ENCODE measurements at regions of chr21 and their contacts with region 1.

Region 1: DNA sequence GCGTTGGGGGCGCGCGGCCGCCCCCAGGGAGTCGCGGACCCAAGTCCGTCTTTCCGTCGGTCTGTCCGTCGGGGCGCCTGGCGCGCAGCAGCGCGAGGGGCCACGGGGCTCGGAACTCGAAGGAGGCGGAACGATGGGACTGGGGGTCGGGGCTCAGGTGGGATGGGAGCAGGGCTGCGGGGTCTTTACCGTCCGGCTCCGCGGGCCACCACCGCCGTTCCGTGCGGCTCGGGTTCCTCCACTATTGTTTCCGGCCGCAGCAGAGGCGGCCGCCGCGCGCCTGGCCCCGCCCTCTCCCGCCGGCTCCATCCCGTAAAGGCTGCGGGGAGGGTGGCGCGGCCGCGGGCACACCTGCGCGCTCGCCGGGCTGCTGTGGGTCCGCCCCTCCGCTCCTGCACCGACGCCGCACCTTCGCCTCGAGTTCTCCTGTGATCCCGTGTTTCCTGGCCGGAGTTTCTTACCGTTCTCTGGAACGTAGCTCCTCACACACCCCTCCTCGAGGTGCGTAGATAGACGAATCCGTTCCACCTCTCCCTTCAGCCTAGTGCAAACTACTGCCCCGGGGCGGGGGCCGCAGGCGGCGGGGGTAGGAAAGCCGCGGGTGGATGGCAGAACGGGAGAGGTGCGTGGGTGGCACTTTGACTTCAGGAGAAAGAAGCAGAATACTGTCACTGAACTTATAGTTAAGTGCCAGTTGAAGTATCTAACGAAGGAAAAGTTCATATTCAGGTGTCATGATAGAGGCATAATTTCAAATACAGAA is at the start of gene C21orf91:
- DNase-seq: peak; percentile 78
- ATAC-seq: peak; percentile 93
- H3K4me3 ChIP-seq: peak within 1 kb of the TSS; percentile 71 to 80
- H3K27ac ChIP-seq: peak within 1 kb of the TSS; percentile 87
- H3K4me1 ChIP-seq: peaks cover 6 to 19% of the 10 kb centered on the region in 2 experiments; a peak in 3 of 4 replicates
- H3K27me3 ChIP-seq: no peaks in the 10 kb centered on the region
- CTCF ChIP-seq: no peak
- POLR2A ChIP-seq: peak; percentile 51
- RAD21 ChIP-seq: no peak
- total RNA-seq, gene C21orf91: 17.7 TPM

Region 2: DNA sequence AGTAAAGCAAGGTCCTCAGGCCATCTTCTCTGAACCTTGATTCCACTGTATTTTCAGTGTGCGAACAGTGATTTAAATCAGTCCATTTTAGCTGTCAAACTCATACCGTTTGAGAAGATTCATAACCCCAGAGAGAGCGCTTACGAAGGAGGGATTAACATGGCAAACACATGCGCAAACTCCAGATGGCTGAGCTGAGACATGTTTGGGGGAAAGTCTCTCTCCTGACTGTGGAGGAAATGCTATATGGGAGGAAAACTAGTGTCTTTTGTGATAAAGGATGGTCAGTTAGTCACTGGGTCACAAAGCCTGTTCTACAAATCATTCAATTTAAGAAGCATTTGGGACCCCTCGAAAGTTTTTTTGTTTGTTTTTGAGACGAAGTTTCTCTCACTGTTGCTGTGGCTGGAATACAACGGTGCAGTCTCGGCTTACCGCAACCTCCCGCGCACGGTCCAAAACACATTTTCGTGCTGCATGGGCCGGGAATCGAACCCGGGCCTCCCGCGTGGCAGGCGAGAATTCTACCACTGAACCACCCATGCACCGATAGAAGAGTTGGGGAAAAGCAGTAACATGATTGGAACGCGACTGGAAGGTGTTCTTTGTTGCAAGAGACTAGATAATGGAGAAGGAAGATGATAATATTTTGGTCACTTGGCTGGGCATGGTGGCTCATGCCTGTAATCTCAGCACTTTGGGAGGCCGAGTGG is 364.8 kb before region 1 on chr21:
- CTCF ChIA-PET with region 1: no interaction called
- POLR2A ChIA-PET with region 1: no interaction called
- RAD21 ChIA-PET with region 1: no interaction called
- intact Hi-C with region 1: loop called (anchors 1 kb)
- DNase-seq: peak; percentile 89
- ATAC-seq: peak; percentile 94
- H3K4me3 ChIP-seq: peak overlapping the region in 1 of 2 experiments; percentile 15; a peak in 1 of 4 replicates
- H3K27ac ChIP-seq: peak overlapping the region; percentile 58
- H3K4me1 ChIP-seq: peaks cover 10 to 15% of the 10 kb centered on the region in 2 experiments
- H3K27me3 ChIP-seq: no peaks in the 10 kb centered on the region
- CTCF ChIP-seq: no peak
- POLR2A ChIP-seq: no peak
- RAD21 ChIP-seq: no peak

Region 3: GRCh38 chr21:17527240-17527639 is 292.1 kb before region 1 on chr21:
- CTCF ChIA-PET with region 1: no interaction called
- POLR2A ChIA-PET with region 1: no interaction called
- RAD21 ChIA-PET with region 1: no interaction called
- intact Hi-C with region 1: no loop called
- DNase-seq: no peak
- ATAC-seq: no peak
- H3K4me3 ChIP-seq: no peak overlapping the region
- H3K27ac ChIP-seq: no peak overlapping the region
- H3K4me1 ChIP-seq: peaks cover 3 to 5% of the 10 kb centered on the region in 2 experiments; a peak in 1 of 4 replicates
- H3K27me3 ChIP-seq: no peaks in the 10 kb centered on the region
- CTCF ChIP-seq: no peak
- POLR2A ChIP-seq: no peak
- RAD21 ChIP-seq: no peak

Region 4: GRCh38 chr21:17611414-17612022 is 207.8 kb before region 1 on chr21:
- CTCF ChIA-PET with region 1: no interaction called
- POLR2A ChIA-PET with region 1: no interaction called
- RAD21 ChIA-PET with region 1: no interaction called
- intact Hi-C with region 1: loop called (anchors 10 kb)
- DNase-seq: peak; percentile 74
- ATAC-seq: peak; percentile 61
- H3K4me3 ChIP-seq: peak overlapping the region; percentile 93 to 95
- H3K27ac ChIP-seq: peak overlapping the region; percentile 80
- H3K4me1 ChIP-seq: peaks cover 13 to 16% of the 10 kb centered on the region in 2 experiments
- H3K27me3 ChIP-seq: no peaks in the 10 kb centered on the region
- CTCF ChIP-seq: no peak
- POLR2A ChIP-seq: no peak
- RAD21 ChIP-seq: no peak